ENCODE measurements at regions of chr6 and their contacts with region 1.

Region 1: DNA sequence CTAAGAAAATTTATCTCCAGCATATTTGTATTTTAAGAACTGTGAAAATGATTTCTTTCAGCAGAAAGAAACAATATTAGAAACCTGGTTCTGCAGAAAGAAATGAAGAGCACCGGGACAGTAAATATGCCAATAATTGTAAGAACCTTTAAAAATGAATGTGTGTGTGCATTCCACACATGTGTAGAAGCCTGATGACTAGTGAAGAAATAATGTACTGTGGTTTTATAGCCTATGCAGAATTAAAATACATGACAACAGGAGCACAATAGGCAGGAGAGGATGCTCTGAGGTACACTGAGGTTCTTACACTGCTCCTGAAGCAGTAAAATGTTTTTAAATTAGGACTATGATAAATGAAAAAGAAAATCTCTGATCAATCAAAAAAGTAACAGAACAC is 48.9 kb downstream of the SNX14 start:
- DNase-seq: no peak
- ATAC-seq: no peak
- H3K4me3 ChIP-seq: no peak overlapping the region
- H3K27ac ChIP-seq: no peak overlapping the region
- H3K4me1 ChIP-seq: no peaks in the 10 kb centered on the region
- H3K27me3 ChIP-seq: no peaks in the 10 kb centered on the region
- CTCF ChIP-seq: no peak

Region 2: GRCh38 chr6:85865420-85866369 is 320.9 kb after region 1 on chr6:
- intact Hi-C with region 1: loop called in 1 of 2 experiments (anchors 5 kb)
- DNase-seq: no peak
- ATAC-seq: peak in 3 of 4 donors; percentile 25 to 41 (median 36)
- H3K4me3 ChIP-seq: peak overlapping the region; percentile 55
- H3K27ac ChIP-seq: no peak overlapping the region
- H3K4me1 ChIP-seq: peaks cover 8% of the 10 kb centered on the region
- H3K27me3 ChIP-seq: no peaks in the 10 kb centered on the region
- CTCF ChIP-seq: no peak

Measured in psoas muscle (tissue), 8 donors.